ENCODE measurements at regions of chr6 and their contacts with region 1.

Region 1: GRCh38 chr6:87472525-87473418 is at the start of gene SLC35A1:
- DNase-seq: peak; percentile 73 to 93 (median 86)
- ATAC-seq: peak; percentile 91
- H3K4me3 ChIP-seq: peak within 1 kb of the TSS; percentile 93 to 96
- H3K4me3 Mint-ChIP-seq: peak within 1 kb of the TSS; percentile 99
- H3K27ac ChIP-seq: peak within 1 kb of the TSS; percentile 97 to 98
- H3K27ac Mint-ChIP-seq: peak within 1 kb of the TSS; percentile 100
- H3K4me1 ChIP-seq: peaks cover 15% of the 10 kb centered on the region
- H3K4me1 Mint-ChIP-seq: peaks cover 18% of the 10 kb centered on the region
- H3K27me3 ChIP-seq: no peaks in the 10 kb centered on the region
- H3K27me3 Mint-ChIP-seq: peaks cover 3% of the 10 kb centered on the region
- CTCF ChIP-seq: peak; percentile 20
- total RNA-seq, gene SLC35A1: 4.3 to 4.9 TPM

Region 2: GRCh38 chr6:87154993-87155841 is 317.6 kb before region 1 on chr6 and contains the start of gene ZNF292:
- CTCF ChIA-PET with region 1: no interaction called
- POLR2A ChIA-PET with region 1: no interaction called
- intact Hi-C with region 1: loop called (anchors 1 to 2 kb)
- DNase-seq: peak; percentile 85 to 98 (median 95)
- ATAC-seq: peak; percentile 67
- H3K4me3 ChIP-seq: peak within 1 kb of the TSS; percentile 73 to 80
- H3K4me3 Mint-ChIP-seq: peak within 1 kb of the TSS; percentile 96
- H3K27ac ChIP-seq: peak within 1 kb of the TSS; percentile 85 to 95
- H3K27ac Mint-ChIP-seq: peak within 1 kb of the TSS; percentile 98
- H3K4me1 ChIP-seq: peaks cover 54% of the 10 kb centered on the region
- H3K4me1 Mint-ChIP-seq: peaks cover 58% of the 10 kb centered on the region
- H3K27me3 ChIP-seq: no peaks in the 10 kb centered on the region
- H3K27me3 Mint-ChIP-seq: no peaks in the 10 kb centered on the region
- CTCF ChIP-seq: no peak
- total RNA-seq, gene ZNF292: 82.6 to 87.6 TPM

Region 3: GRCh38 chr6:87261534-87261933 is 211.2 kb before region 1 on chr6:
- CTCF ChIA-PET with region 1: no interaction called
- POLR2A ChIA-PET with region 1: no interaction called
- intact Hi-C with region 1: no loop called
- DNase-seq: no peak
- ATAC-seq: no peak
- H3K4me3 ChIP-seq: no peak overlapping the region
- H3K4me3 Mint-ChIP-seq: no peak overlapping the region
- H3K27ac ChIP-seq: no peak overlapping the region
- H3K27ac Mint-ChIP-seq: no peak overlapping the region
- H3K4me1 ChIP-seq: no peaks in the 10 kb centered on the region
- H3K4me1 Mint-ChIP-seq: peaks cover 2% of the 10 kb centered on the region
- H3K27me3 ChIP-seq: no peaks in the 10 kb centered on the region
- H3K27me3 Mint-ChIP-seq: no peaks in the 10 kb centered on the region
- CTCF ChIP-seq: no peak

Region 4: GRCh38 chr6:87322304-87323212 is 150.2 kb before region 1 on chr6 and contains the start of gene SMIM8:
- CTCF ChIA-PET with region 1: interaction called, 3 read pairs
- POLR2A ChIA-PET with region 1: no interaction called
- intact Hi-C with region 1: loop called (anchors 1 kb)
- DNase-seq: peak; percentile 66 to 90 (median 86)
- ATAC-seq: peak; percentile 99
- H3K4me3 ChIP-seq: peak within 1 kb of the TSS; percentile 72 to 86
- H3K4me3 Mint-ChIP-seq: peak within 1 kb of the TSS; percentile 94
- H3K27ac ChIP-seq: peak within 1 kb of the TSS; percentile 52 to 58
- H3K27ac Mint-ChIP-seq: peak within 1 kb of the TSS; percentile 90
- H3K4me1 ChIP-seq: peaks cover 6% of the 10 kb centered on the region
- H3K4me1 Mint-ChIP-seq: peaks cover 25% of the 10 kb centered on the region
- H3K27me3 ChIP-seq: no peaks in the 10 kb centered on the region
- H3K27me3 Mint-ChIP-seq: no peaks in the 10 kb centered on the region
- CTCF ChIP-seq: peak; percentile 99
- total RNA-seq, gene SMIM8: 4.2 TPM

Region 5: DNA sequence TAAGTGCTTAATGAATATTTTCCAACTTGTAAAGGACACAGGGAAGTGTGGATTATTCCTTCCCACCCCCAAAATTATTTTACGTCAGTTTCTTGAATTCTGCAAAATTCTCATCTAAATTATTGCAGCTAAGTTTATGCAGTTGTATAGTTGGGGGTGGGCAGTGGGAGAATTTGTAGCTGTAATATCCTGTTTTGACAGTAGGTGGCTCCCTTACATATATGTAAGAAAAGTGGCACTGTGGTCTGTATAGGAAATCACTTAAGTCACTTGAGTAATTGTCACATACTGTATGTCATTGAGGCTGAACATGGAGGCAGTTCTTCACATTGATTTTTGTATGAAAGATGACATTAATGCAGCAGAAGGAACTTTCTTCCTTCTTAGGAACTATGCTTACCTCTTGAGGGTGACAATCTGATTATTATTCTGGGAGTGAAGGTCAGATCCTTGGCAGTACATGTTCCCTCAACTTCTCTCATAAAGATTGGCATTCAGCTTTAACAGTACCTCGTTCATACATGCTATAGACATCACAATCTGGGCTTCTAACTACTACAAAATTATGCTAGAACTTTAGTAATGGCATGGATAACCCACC is 79.7 kb before region 1 on chr6:
- CTCF ChIA-PET with region 1: no interaction called
- POLR2A ChIA-PET with region 1: interaction called, 4 read pairs
- intact Hi-C with region 1: loop called in 1 of 2 experiments (anchors 5 kb)
- DNase-seq: peak in 7 of 9 experiments; percentile 8 to 79 (median 29)
- ATAC-seq: peak; percentile 99
- H3K4me3 ChIP-seq: no peak overlapping the region
- H3K4me3 Mint-ChIP-seq: no peak overlapping the region
- H3K27ac ChIP-seq: no peak overlapping the region
- H3K27ac Mint-ChIP-seq: no peak overlapping the region
- H3K4me1 ChIP-seq: no peaks in the 10 kb centered on the region
- H3K4me1 Mint-ChIP-seq: peaks cover 3% of the 10 kb centered on the region
- H3K27me3 ChIP-seq: no peaks in the 10 kb centered on the region
- H3K27me3 Mint-ChIP-seq: no peaks in the 10 kb centered on the region
- CTCF ChIP-seq: peak; percentile 72

Region 6: GRCh38 chr6:87407901-87408720 is 64.7 kb before region 1 on chr6 and contains the start of gene CFAP206:
- CTCF ChIA-PET with region 1: no interaction called
- POLR2A ChIA-PET with region 1: no interaction called
- intact Hi-C with region 1: loop called (anchors 1 to 2 kb)
- DNase-seq: peak; percentile 50 to 90 (median 77)
- ATAC-seq: peak; percentile 77
- H3K4me3 ChIP-seq: peak within 1 kb of the TSS; percentile 65 to 91
- H3K4me3 Mint-ChIP-seq: peak within 1 kb of the TSS; percentile 87
- H3K27ac ChIP-seq: peak within 1 kb of the TSS; percentile 64 to 71
- H3K27ac Mint-ChIP-seq: peak within 1 kb of the TSS; percentile 57
- H3K4me1 ChIP-seq: peaks cover 10% of the 10 kb centered on the region
- H3K4me1 Mint-ChIP-seq: peaks cover 7% of the 10 kb centered on the region
- H3K27me3 ChIP-seq: peaks cover 3 to 5% of the 10 kb centered on the region in 2 experiments
- H3K27me3 Mint-ChIP-seq: peaks cover 17% of the 10 kb centered on the region
- CTCF ChIP-seq: no peak
- total RNA-seq, gene CFAP206: not detected

Region 7: GRCh38 chr6:87419266-87419665 is 53.5 kb before region 1 on chr6:
- CTCF ChIA-PET with region 1: no interaction called
- POLR2A ChIA-PET with region 1: no interaction called
- intact Hi-C with region 1: no loop called
- DNase-seq: no peak
- ATAC-seq: no peak
- H3K4me3 ChIP-seq: no peak overlapping the region
- H3K4me3 Mint-ChIP-seq: no peak overlapping the region
- H3K27ac ChIP-seq: no peak overlapping the region
- H3K27ac Mint-ChIP-seq: no peak overlapping the region
- H3K4me1 ChIP-seq: no peaks in the 10 kb centered on the region
- H3K4me1 Mint-ChIP-seq: no peaks in the 10 kb centered on the region
- H3K27me3 ChIP-seq: no peaks in the 10 kb centered on the region
- H3K27me3 Mint-ChIP-seq: peaks cover 14% of the 10 kb centered on the region
- CTCF ChIP-seq: no peak

Region 8: GRCh38 chr6:87540539-87540938 is 67.8 kb after region 1 on chr6:
- CTCF ChIA-PET with region 1: no interaction called
- POLR2A ChIA-PET with region 1: no interaction called
- intact Hi-C with region 1: no loop called
- DNase-seq: no peak
- ATAC-seq: no peak
- H3K4me3 ChIP-seq: no peak overlapping the region
- H3K4me3 Mint-ChIP-seq: no peak overlapping the region
- H3K27ac ChIP-seq: no peak overlapping the region
- H3K27ac Mint-ChIP-seq: no peak overlapping the region
- H3K4me1 ChIP-seq: no peaks in the 10 kb centered on the region
- H3K4me1 Mint-ChIP-seq: no peaks in the 10 kb centered on the region
- H3K27me3 ChIP-seq: no peaks in the 10 kb centered on the region
- H3K27me3 Mint-ChIP-seq: no peaks in the 10 kb centered on the region
- CTCF ChIP-seq: no peak

Region 9: DNA sequence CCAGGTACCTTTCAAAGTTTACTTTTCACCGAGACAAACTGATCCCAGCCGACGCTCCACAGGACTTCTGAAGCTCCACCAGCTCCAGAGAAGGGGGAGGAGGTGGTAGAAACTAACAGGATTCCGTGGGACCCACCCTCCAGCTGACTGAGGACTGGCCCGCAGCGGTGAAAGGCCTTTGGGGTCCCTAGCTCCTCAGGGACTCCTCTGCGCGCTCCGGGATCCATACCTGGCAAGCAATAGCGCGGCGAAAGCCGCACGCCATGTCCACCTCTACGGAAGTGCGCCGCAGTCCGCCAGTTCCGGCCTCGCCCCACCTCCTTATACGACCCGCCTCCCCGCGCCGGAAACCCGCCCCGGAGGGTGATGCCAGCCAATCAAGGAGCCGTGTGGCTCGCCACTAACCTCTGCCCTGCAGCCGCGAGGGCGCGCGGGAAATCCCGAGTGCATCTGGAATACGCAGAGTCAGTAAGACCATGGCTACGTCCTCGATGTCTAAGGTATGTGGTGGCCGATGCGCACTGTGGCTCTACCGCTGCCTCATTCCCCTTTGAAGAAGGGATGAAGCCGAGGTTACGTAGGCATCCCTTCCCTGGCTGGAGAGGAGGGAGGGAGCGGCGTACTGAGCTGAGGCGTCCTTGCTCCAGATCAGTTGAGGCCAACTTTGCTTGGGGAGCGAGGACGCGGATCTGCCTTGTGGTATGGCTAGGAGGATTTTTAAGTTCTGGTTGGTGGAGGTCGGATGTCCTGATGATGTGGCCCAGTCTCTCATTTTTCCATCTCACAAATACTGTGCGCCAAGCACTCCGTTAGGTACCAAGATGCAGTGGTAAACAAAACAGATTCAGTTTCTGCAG is 117.1 kb after region 1 on chr6 and contains the starts of genes ORC3 and RARS2:
- CTCF ChIA-PET with region 1: no interaction called
- POLR2A ChIA-PET with region 1: interaction called, 4 read pairs
- intact Hi-C with region 1: loop called (anchors 1 to 2 kb)
- DNase-seq: peak; percentile 85 to 96 (median 93)
- ATAC-seq: peak; percentile 98
- H3K4me3 ChIP-seq: peak within 1 kb of the TSS; percentile 69 to 89
- H3K4me3 Mint-ChIP-seq: peak within 1 kb of the TSS; percentile 93
- H3K27ac ChIP-seq: peak within 1 kb of the TSS; percentile 60 to 78
- H3K27ac Mint-ChIP-seq: peak within 1 kb of the TSS; percentile 92
- H3K4me1 ChIP-seq: peaks cover 35% of the 10 kb centered on the region
- H3K4me1 Mint-ChIP-seq: peaks cover 64% of the 10 kb centered on the region
- H3K27me3 ChIP-seq: no peaks in the 10 kb centered on the region
- H3K27me3 Mint-ChIP-seq: no peaks in the 10 kb centered on the region
- CTCF ChIP-seq: no peak
- total RNA-seq, gene ORC3: 9.4 to 9.9 TPM
- total RNA-seq, gene RARS2: 15.8 to 20.4 TPM